Astrocyte of the cerebellum (primary cell): ENCODE measurements at regions of chr17 and their contacts with region 1.

Region 1: GRCh38 chr17:33200587-33200986 is 92.5 kb downstream of the ASIC2 start:
- DNase-seq: no peak
- H3K4me3 ChIP-seq: no peak overlapping the region
- CTCF ChIP-seq: peak; percentile 10

Region 2: DNA sequence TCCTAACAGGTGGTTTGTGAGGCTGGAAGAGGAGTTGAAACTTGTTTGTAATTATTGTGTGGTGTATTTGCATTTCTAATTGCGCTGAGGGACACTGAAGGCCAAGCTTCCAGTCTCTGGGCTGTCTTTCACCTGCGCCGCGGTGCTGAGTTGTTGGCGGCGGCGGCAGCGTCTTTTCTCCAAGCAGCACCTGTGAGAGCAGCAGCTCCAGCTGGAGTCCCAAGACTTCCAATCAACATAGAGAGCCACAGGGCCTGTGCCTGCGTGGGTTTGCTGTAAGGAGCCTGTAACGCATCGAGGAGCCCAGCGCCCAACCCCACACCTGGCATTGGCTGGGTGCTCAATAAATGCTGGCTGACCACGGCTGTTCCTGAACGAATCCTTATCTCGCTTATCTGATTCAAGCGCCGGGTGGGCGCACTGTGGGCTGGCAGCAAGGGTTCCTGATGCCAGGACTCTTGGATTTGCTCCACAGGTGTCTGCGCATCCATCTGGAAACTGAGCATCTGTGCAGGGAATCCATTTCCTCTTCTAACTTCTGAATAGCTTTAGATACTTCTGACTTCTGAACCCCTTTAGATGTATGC is 45.6 kb before region 1 on chr17:
- in situ Hi-C with region 1: loop called (anchors 5 kb)
- DNase-seq: no peak
- H3K4me3 ChIP-seq: no peak overlapping the region
- CTCF ChIP-seq: no peak

Region 3: DNA sequence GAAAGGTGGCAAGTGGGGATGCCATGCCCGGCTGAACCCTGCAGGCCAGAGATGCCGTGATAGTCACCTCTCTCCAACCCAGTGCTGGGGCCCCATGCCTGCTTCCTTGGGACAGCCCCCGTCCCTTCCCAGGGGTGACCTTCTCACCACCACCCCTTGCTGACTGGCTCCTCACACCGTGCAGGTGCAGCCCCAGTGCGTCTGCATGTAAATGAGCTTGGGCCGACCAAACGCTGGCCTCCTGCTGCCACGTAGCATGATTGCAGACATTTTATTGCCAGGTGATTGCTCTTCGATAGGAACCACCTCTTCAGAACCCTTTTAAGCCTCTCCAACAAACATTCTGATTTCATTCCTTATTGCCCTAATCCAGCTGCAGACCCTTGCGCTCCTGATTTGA is 60.1 kb after region 1 on chr17:
- in situ Hi-C with region 1: no loop called
- DNase-seq: no peak
- H3K4me3 ChIP-seq: no peak overlapping the region
- CTCF ChIP-seq: no peak